Activated CD8-positive, alpha-beta T cell treated with anti-CD3 and anti-CD28 coated beads for 36 hours (primary cell): ENCODE measurements at regions of chr22 and their contacts with region 1.

Region 1: GRCh38 chr22:26502688-26503561 is 9.3 kb downstream of the TFIP11 start:
- DNase-seq: peak; percentile 86
- ATAC-seq: peak; percentile 95
- H3K4me3 Mint-ChIP-seq: peak overlapping the region; percentile 1
- H3K27ac Mint-ChIP-seq: peak overlapping the region; percentile 85
- H3K4me1 Mint-ChIP-seq: peaks cover 23% of the 10 kb centered on the region
- H3K27me3 Mint-ChIP-seq: no peaks in the 10 kb centered on the region
- CTCF ChIP-seq: peak; percentile 75

Region 2: GRCh38 chr22:26304730-26305129 is 198.2 kb before region 1 on chr22:
- CTCF ChIA-PET with region 1: no interaction called
- POLR2A ChIA-PET with region 1: no interaction called
- intact Hi-C with region 1: no loop called
- DNase-seq: no peak
- ATAC-seq: no peak
- H3K4me3 Mint-ChIP-seq: no peak overlapping the region
- H3K27ac Mint-ChIP-seq: no peak overlapping the region
- H3K4me1 Mint-ChIP-seq: no peaks in the 10 kb centered on the region
- H3K27me3 Mint-ChIP-seq: peaks cover 26% of the 10 kb centered on the region
- CTCF ChIP-seq: no peak

Region 3: DNA sequence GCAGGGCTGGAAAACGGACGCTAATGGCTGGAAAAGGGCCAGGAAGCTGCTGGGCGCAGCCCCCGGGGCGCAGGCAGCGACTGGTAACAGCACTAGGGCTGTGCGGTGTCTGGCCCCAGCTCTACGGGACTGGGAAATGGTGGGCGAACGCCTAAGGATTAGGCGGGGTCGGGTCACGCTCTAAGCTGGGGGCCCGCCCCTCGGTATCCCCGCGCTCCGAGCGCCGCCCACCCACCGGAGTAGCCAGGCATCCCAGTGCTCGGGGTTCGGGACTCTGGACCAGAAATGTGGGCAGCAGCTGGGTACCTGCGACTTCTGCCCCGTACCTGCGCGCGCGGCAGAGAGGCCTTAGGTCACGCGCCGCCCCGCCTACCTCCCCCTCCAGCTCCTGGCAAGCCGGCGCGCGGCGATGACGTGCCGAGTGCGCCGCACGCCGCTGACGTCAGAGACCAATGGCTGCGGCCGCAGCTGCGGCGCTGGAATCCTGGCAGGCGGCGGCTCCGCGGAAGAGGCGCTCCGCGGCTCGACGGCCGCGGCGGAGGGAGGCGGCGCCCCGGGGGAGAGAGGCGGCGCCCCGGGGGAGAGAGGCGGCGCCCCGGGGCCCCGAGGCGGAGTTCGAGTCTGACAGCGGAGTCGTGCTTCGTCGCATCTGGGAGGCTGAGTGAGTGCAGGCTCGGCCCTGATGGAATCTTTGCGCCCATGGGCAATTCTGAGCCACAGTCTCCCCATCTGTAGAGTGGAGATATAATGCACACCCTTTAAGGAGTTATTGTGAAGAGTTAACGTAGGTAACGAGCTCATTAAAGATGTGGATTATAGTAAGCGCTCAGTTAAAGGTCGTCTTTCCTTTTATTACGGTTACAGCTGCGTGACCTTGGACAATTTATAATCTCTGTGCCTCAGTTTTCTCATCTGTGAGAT is 19.2 kb before region 1 on chr22 and contains the starts of genes HPS4 and SRRD:
- CTCF ChIA-PET with region 1: interaction called, 14 read pairs
- POLR2A ChIA-PET with region 1: interaction called, 7 read pairs
- intact Hi-C with region 1: no loop called
- DNase-seq: peak; percentile 92
- ATAC-seq: peak; percentile 81
- H3K4me3 Mint-ChIP-seq: peak within 1 kb of the TSS; percentile 94
- H3K27ac Mint-ChIP-seq: peak within 1 kb of the TSS; percentile 98
- H3K4me1 Mint-ChIP-seq: peaks cover 61% of the 10 kb centered on the region
- H3K27me3 Mint-ChIP-seq: no peaks in the 10 kb centered on the region
- CTCF ChIP-seq: no peak
- total RNA-seq, gene HPS4: 51.8 to 53.5 TPM
- total RNA-seq, gene SRRD: 24.8 to 26.3 TPM

Region 4: DNA sequence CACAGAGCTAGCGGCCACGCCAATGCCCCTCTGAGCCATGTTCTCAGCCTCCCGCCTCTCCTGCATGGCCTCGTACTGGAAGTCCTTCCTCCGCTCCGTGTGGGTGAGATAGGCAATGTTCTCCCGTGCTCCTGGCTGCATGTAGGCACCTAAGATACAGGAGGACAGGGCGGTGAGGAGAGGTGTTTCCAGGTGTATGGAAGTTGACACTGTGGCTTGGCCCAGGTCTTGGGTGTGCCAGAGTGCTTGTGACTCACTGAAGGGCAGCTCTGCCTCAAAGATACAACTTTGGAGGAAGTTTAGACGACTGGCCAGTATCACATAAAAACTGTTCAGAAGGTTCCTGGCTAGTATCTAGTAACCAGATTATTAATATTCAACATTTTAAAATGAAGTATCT is 10.7 kb before region 1 on chr22:
- CTCF ChIA-PET with region 1: interaction called, 13 read pairs
- POLR2A ChIA-PET with region 1: interaction called, 9 read pairs
- intact Hi-C with region 1: no loop called
- DNase-seq: no peak
- ATAC-seq: no peak
- H3K4me3 Mint-ChIP-seq: no peak overlapping the region
- H3K27ac Mint-ChIP-seq: peak overlapping the region; percentile 46
- H3K4me1 Mint-ChIP-seq: peaks cover 11% of the 10 kb centered on the region
- H3K27me3 Mint-ChIP-seq: no peaks in the 10 kb centered on the region
- CTCF ChIP-seq: no peak

Region 5: GRCh38 chr22:26658671-26659478 is 155.9 kb after region 1 on chr22:
- CTCF ChIA-PET with region 1: interaction called, 15 read pairs
- POLR2A ChIA-PET with region 1: no interaction called
- intact Hi-C with region 1: no loop called
- DNase-seq: peak; percentile 93
- ATAC-seq: peak; percentile 82
- H3K4me3 Mint-ChIP-seq: peak overlapping the region; percentile 83
- H3K27ac Mint-ChIP-seq: peak overlapping the region; percentile 87
- H3K4me1 Mint-ChIP-seq: peaks cover 30% of the 10 kb centered on the region
- H3K27me3 Mint-ChIP-seq: peaks cover 4% of the 10 kb centered on the region
- CTCF ChIP-seq: no peak

Region 6: DNA sequence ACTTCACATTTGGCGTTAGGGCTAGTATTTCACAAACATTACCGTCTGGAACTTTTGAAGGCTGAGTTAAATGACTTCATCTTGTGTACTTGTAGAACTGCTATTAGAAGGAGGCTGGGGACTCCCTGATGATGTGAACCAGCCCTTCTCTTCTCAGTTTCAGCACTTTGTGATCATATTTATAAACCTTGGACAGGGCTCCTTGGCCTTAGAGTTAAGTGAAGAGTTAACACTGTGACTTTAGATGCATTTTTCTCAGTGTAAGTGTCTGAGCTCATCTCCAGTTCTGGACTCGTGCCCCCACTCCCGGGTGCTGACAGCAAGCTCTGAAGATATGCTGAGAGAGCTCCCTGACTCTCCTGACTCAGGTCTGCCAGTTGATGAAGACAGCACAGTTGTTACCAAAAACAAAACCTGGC is 162.9 kb after region 1 on chr22:
- CTCF ChIA-PET with region 1: interaction called, 49 read pairs
- POLR2A ChIA-PET with region 1: interaction called, 3 read pairs
- intact Hi-C with region 1: loop called (anchors 5 kb)
- DNase-seq: peak; percentile 24
- ATAC-seq: peak; percentile 28
- H3K4me3 Mint-ChIP-seq: peak overlapping the region; percentile 72
- H3K27ac Mint-ChIP-seq: peak overlapping the region; percentile 96
- H3K4me1 Mint-ChIP-seq: peaks cover 55% of the 10 kb centered on the region
- H3K27me3 Mint-ChIP-seq: no peaks in the 10 kb centered on the region
- CTCF ChIP-seq: peak; percentile 30

Region 7: GRCh38 chr22:26672590-26673468 is 169.9 kb after region 1 on chr22:
- CTCF ChIA-PET with region 1: interaction called, 49 read pairs
- POLR2A ChIA-PET with region 1: interaction called, 3 read pairs
- intact Hi-C with region 1: loop called (anchors 5 kb)
- DNase-seq: peak; percentile 97
- ATAC-seq: peak; percentile 75
- H3K4me3 Mint-ChIP-seq: peak overlapping the region; percentile 94
- H3K27ac Mint-ChIP-seq: peak overlapping the region; percentile 95
- H3K4me1 Mint-ChIP-seq: peaks cover 65% of the 10 kb centered on the region
- H3K27me3 Mint-ChIP-seq: no peaks in the 10 kb centered on the region
- CTCF ChIP-seq: peak; percentile 12